Colonic mucosa (tissue), 4 donors: ENCODE measurements at regions of chr10 and their contacts with region 1.

Region 1: DNA sequence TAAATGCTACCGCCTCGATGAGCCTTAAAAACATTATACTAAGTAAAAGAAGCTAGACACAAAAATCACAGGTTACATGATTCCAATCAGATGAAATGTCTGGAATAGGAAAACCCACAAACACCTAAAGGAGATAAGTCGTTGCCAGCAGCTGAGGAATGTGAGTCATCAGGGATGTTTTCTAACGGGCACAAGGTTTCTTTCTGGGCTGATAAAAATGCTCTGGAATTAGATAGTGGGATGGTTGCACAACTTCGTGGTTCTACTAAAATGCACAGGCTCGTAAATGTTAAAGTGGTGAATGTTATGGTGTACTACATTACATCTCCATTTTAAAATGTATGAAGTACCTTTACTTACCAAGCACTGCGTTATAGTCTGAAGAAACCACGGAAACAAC is 9.7 kb downstream of the ABLIM1 start:
- DNase-seq: peak; percentile 46
- H3K4me3 ChIP-seq: no peak overlapping the region
- H3K27ac ChIP-seq: no peak overlapping the region
- H3K4me1 ChIP-seq: peaks cover 29% of the 10 kb centered on the region
- H3K27me3 ChIP-seq: no peaks in the 10 kb centered on the region
- CTCF ChIP-seq: no peak

Region 2: GRCh38 chr10:114694752-114695151 is 46.4 kb after region 1 on chr10:
- intact Hi-C with region 1: loop called (anchors 10 kb)
- DNase-seq: peak; percentile 52
- H3K4me3 ChIP-seq: no peak overlapping the region
- H3K27ac ChIP-seq: no peak overlapping the region
- H3K4me1 ChIP-seq: no peaks in the 10 kb centered on the region
- H3K27me3 ChIP-seq: no peaks in the 10 kb centered on the region
- CTCF ChIP-seq: peak; percentile 48